PC-3 (cell line): ENCODE measurements at regions of chr1 and their contacts with region 1.

Region 1: DNA sequence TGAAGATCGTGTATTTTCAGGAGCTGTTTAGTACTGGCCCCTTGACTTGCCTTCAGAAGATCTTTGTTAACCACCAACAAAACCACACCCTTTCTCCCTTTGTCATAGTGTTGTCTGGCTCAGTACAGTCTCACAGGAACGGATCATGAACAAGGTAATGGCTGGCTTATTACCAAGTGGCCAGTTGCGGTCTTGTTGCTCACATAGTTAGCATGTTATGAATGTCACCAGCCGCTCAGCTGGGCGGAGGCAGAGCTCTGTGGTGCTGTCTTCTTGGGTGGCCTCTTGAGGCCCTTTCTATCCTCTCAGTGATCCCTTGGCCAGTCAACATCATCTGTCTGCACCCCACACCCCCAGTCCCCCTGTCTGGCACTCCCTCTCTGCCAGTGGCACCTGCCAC is 21.4 kb downstream of the CNIH3 start:
- DNase-seq: peak; percentile 99
- ATAC-seq: peak; percentile 83
- H3K4me3 ChIP-seq: peak overlapping the region; percentile 7; the same call in 1 of the 2 replicates
- H3K27ac ChIP-seq: peak overlapping the region; percentile 66
- H3K4me1 ChIP-seq: peaks cover 66% of the 10 kb centered on the region
- H3K27me3 ChIP-seq: no peaks in the 10 kb centered on the region
- CTCF ChIP-seq: no peak

Region 2: GRCh38 chr1:224513787-224514209 is 123.7 kb before region 1 on chr1:
- CTCF ChIA-PET with region 1: interaction called, 5 read pairs
- POLR2A ChIA-PET with region 1: no interaction called
- intact Hi-C with region 1: loop called (anchors 1 kb)
- DNase-seq: peak; percentile 97
- ATAC-seq: peak; percentile 95
- H3K4me3 ChIP-seq: no peak overlapping the region
- H3K27ac ChIP-seq: no peak overlapping the region
- H3K4me1 ChIP-seq: peaks cover 25% of the 10 kb centered on the region
- H3K27me3 ChIP-seq: no peaks in the 10 kb centered on the region
- CTCF ChIP-seq: peak; percentile 98

Region 3: DNA sequence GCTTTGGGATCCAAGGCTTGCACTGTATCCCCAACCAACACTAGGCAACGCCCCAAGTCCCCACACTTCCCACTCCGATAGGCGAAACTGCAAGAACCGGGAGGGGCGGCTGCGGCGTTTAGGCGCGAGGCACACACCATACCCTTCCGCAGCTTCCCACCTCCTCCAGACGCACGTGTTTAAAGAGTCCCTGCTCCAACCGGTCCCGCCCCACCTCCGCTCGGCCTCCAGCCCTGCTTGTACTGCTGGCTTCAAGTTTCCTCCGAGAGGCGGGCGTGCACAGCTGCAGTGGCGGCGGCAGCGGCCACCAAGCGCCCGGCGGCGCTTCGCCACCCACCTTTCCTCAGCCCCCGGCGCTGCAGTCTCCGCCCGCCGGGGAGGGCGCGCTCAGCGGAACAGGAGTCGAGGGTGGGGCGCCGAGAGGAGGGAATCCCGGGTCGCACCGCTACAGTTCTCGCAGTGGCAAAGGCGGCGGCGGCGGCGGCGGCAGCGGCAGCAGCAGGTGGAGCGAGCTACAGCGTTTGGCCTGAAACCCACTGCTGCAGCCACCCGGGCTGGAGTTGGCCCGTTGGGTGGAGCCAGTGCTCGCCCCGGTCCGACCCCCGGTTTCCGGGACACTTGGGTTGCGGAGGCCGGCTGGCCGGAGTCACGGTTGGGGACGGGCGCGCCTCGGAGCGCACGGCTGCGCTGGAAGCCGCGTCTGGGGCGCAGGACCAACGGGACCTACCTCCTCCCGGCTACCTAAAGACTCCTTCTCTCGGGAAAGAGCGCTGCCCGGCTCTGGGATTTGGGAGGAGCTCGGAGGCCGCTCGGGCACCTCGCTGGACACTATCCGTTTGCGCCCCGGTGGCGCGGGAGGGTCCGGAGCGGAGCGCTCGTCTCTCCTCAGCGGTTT is 21.4 kb before region 1 on chr1 and contains the start of gene CNIH3:
- CTCF ChIA-PET with region 1: no interaction called
- POLR2A ChIA-PET with region 1: interaction called, 5 read pairs
- intact Hi-C with region 1: loop called (anchors 1 kb)
- DNase-seq: peak; percentile 75
- ATAC-seq: peak; percentile 86
- H3K4me3 ChIP-seq: peak within 1 kb of the TSS; percentile 80
- H3K27ac ChIP-seq: no peak within 1 kb of the TSS
- H3K4me1 ChIP-seq: peaks cover 16% of the 10 kb centered on the region; the same call in 1 of the 2 replicates
- H3K27me3 ChIP-seq: no peaks in the 10 kb centered on the region
- CTCF ChIP-seq: no peak
- total RNA-seq, gene CNIH3: 5.6 and 7.4 TPM in 2 replicates